ENCODE measurements at regions of chr11 and their contacts with region 1.

Region 1: GRCh38 chr11:2992234-2992996 is at the start of gene NAP1L4:
- H3K4me3 ChIP-seq: peak within 1 kb of the TSS; percentile 87
- H3K27ac ChIP-seq: peak within 1 kb of the TSS; percentile 67
- H3K4me1 ChIP-seq: no peaks in the 10 kb centered on the region
- CTCF ChIP-seq: 0 out of 2 replicates have a peak, but pooled peaks have one; percentile 21

Region 2: DNA sequence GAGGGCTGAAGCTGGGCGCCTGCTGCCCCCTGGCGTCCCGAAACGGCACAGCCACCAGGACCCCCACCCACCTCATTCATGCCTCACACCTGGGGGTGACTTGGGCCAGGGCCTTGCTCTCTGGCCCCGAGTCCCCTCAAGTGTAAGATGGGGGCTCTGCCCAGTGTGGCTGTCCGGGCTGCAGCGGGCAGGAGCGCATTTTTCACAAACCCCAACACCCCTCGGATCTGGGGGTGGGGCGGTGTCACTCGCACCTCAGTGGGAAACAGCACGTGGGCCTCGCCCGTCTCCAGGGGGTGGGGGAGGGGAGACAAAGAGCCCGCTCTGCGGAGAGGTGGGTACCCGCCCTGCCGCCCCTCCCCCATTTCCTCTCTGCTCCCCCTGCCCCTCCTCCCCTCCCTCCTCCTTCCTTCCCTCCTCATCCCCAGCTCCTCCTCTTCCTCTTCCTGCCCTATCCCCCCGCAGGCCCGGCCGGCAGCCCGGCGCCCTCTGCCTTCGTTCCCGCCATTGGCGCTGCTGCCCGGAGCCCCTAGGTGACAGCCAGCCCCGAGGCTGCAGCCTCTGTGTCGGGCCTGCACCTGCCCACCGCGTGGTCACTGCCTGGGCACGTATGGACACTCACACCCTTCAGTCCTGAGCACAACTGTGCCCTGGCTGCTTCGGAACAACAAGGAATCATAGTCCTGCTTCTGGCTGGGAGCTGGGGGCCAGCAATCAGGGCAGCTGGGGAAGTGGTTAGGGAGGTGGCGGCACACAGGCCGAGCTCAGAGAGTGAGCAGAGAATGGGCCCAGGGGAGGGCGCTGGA is 100.0 kb before region 1 on chr11:
- CTCF ChIA-PET with region 1: no interaction called
- POLR2A ChIA-PET with region 1: no interaction called
- H3K4me3 ChIP-seq: no peak overlapping the region
- H3K27ac ChIP-seq: no peak overlapping the region
- H3K4me1 ChIP-seq: no peaks in the 10 kb centered on the region
- CTCF ChIP-seq: peak; percentile 71

Region 3: DNA sequence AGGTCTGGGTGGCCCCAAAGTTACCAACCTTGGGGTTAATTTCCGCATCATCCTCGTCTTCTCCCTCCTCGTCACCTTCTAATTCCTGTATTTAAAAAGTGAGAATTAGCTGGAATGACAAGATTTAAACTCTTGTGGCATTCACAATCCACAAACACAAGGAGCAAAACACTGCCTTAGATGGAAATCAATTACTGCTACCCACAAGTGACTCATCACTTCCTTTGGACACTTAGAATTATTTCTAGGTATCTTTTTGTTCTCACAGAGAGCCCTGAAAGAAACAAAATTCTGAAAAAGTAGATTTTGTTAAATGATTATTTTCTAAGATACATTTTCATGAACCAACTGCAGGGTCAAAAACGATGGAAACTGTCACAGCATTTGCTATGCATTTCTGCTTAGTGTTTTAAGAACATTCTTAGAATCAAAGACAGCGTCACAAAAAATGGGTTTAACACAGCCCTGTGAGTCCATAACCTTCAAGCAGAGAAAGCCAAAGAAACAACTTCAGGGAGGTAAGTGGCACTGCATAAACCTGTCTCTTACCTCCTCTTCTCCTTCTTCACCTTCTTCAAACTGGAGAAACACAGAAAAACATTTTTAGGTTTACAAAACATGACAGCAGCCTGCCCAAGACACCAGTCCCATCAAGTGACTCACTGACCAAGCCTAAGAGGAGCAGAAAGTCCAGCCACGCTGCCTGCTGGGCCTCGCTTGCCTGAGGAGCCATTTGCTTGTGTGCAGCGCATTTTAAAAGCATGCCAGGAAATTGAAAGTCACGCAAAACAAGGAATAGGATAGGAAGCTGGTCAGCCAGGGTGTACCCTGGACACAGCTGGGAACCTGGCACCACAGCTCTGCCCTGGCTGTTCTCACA is 40.9 kb before region 1 on chr11:
- CTCF ChIA-PET with region 1: no interaction called
- POLR2A ChIA-PET with region 1: no interaction called
- H3K4me3 ChIP-seq: no peak overlapping the region
- H3K27ac ChIP-seq: no peak overlapping the region
- H3K4me1 ChIP-seq: no peaks in the 10 kb centered on the region
- CTCF ChIP-seq: no peak

Region 4: DNA sequence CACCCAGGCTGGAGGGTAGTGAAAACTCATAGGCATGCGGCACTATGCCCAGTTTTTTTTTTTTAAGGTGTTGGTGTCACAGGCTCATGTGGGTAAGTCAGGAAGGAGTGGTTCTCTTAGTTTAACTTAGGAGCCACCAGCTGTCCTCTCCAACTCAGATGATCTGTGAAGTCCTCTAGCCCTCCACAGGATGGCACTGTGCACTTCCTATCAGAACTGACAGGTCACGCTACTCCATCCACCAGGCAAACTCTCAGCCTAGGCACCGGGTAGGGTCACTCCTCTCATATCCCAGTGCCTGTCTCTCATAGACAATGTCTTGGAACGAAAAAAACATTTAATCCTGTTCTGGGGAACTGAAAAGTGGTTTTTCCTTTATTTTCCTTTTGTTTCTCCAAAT is 16.8 kb before region 1 on chr11:
- CTCF ChIA-PET with region 1: interaction called, 17 read pairs
- POLR2A ChIA-PET with region 1: interaction called, 15 read pairs
- H3K4me3 ChIP-seq: no peak overlapping the region
- H3K27ac ChIP-seq: no peak overlapping the region
- H3K4me1 ChIP-seq: no peaks in the 10 kb centered on the region
- CTCF ChIP-seq: 0 out of 2 replicates have a peak, but pooled peaks have one; percentile 11

Region 5: GRCh38 chr11:2982214-2982613 is 10.2 kb before region 1 on chr11:
- CTCF ChIA-PET with region 1: interaction called, 4 read pairs
- POLR2A ChIA-PET with region 1: interaction called, 15 read pairs
- H3K4me3 ChIP-seq: no peak overlapping the region
- H3K27ac ChIP-seq: no peak overlapping the region
- H3K4me1 ChIP-seq: no peaks in the 10 kb centered on the region
- CTCF ChIP-seq: no peak

Measured in HEK293 (cell line).